ENCODE measurements at regions of chr2 and their contacts with region 1.

Region 1: GRCh38 chr2:98827625-98828368 is 96.9 kb upstream of the MGAT4A start:
- DNase-seq: no peak
- H3K4me3 Mint-ChIP-seq: no peak overlapping the region
- H3K27ac Mint-ChIP-seq: no peak overlapping the region
- H3K4me1 Mint-ChIP-seq: peaks cover 35% of the 10 kb centered on the region
- H3K27me3 Mint-ChIP-seq: peaks cover 2% of the 10 kb centered on the region

Region 2: DNA sequence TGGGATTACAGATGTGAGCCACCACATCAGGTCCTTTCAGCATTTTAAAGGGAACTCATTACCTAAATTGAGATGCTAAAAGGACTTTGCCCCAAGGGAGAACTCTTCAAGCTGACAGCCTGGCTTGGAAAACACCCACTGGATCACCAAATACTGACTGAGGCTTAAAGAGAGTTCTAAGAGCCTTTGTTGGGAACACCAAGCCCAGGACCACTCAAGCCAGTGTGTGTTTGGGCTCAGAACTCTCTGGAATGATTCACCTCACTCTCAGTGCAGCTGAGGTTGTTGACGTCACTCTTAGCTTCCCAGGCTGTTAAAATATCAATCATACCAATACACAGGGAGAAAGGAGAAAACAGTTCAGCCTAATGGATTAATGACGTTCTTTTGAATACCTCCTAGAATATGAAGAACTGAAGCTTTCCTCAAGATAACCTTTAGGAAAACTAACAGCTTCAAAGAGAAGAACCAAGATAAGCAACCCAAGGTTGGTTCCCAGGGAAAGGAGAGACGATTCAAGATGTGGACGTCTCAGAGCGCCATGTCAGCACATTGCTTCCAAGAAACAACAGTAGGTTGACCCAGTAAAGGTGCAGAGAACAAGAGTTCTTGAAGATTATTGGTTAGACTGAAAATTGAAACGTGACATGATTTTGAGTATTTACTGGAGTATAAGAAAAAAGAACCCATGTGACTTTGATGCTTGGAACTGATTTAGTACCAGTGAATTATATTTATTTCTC is 48.9 kb before region 1 on chr2:
- CTCF ChIA-PET with region 1: interaction called, 3 read pairs
- intact Hi-C with region 1: loop called (anchors 2 kb)
- DNase-seq: no peak
- H3K4me3 Mint-ChIP-seq: no peak overlapping the region
- H3K27ac Mint-ChIP-seq: no peak overlapping the region
- H3K4me1 Mint-ChIP-seq: peaks cover 3% of the 10 kb centered on the region
- H3K27me3 Mint-ChIP-seq: no peaks in the 10 kb centered on the region

Region 3: DNA sequence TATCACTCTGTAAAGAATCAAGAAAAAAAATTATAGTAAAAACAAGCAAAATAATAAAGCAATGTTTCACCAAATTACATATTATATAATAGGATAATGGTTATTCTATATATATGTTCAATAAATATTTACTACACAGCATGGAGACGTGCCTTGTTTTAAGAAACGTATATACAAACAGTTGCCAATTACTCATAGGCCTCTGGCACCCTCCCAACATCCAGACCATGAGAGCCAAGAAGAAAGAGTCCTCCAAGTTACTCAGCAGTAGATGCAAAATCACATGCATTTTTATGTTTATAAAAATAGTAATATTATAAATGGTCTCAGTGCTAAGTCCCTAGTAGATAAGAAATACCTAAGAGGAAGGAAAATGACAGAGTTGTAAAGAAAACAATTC is 597.2 kb after region 1 on chr2:
- CTCF ChIA-PET with region 1: no interaction called
- intact Hi-C with region 1: no loop called
- DNase-seq: no peak
- H3K4me3 Mint-ChIP-seq: no peak overlapping the region
- H3K27ac Mint-ChIP-seq: no peak overlapping the region
- H3K4me1 Mint-ChIP-seq: peaks cover 2% of the 10 kb centered on the region
- H3K27me3 Mint-ChIP-seq: no peaks in the 10 kb centered on the region

Measured in activated naive CD4-positive, alpha-beta T cell treated with anti-CD3 and anti-CD28 coated beads for 36 hours (primary cell).